CD8-positive, alpha-beta memory T cell (primary cell): ENCODE measurements at regions of chr19 and their contacts with region 1.

Region 1: DNA sequence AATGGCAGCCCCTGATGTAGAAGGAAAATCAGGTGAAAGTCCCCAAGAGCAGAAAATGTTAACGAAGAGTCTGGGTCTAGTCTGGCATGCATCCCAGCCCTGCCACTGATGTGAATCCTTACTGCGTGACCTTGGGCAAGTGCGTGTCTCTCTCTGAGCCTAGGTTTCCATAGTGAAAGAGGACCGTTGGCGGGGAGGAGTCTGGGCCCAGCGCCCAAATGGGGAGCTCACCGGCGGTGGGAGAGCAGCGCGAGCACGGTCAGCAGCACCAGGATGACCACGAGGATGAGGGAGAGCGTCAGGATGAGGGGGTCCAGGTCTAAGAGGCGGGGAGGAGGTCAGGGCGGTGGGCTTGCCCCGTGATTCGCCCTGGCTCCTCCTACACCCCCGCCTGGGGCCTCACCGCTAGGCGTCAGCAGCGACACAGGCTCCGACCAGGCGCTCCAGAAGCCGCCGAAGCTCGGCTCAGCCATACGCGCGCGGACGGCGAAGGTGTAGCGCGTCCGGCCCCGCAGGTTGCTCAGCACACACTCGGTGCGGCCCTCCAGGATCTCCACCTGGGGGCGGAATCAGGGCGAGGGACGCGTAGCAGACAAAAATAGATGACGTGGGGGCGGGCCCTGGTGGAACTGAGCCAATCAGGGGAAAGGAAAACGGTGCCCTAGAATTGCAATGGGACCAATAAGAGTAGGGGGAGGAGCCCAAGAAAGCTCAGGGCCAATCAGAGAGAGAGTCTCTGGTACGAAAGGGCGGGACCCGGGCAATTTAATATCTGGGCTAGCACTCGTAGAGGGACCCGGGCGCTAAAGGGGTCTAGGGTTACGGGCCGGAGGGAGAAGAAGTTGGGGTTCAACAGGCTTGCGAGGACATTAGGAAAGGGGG is 3.2 kb downstream of the EPOR start:
- DNase-seq: peak; percentile 93 to 99 (median 98)
- H3K4me3 ChIP-seq: peak overlapping the region; percentile 67
- H3K4me3 Mint-ChIP-seq: peak overlapping the region; percentile 84 to 98 (median 92)
- H3K27ac ChIP-seq: peak overlapping the region; percentile 89
- H3K27ac Mint-ChIP-seq: peak overlapping the region; percentile 95 to 100 (median 98)
- H3K4me1 ChIP-seq: peaks cover 52% of the 10 kb centered on the region
- H3K4me1 Mint-ChIP-seq: peaks cover 34 to 53% (median 46%) of the 10 kb centered on the region in 3 donors
- H3K27me3 ChIP-seq: peaks cover 5% of the 10 kb centered on the region
- H3K27me3 Mint-ChIP-seq: peaks cover 13 to 15% of the 10 kb centered on the region in 2 donors

Region 2: DNA sequence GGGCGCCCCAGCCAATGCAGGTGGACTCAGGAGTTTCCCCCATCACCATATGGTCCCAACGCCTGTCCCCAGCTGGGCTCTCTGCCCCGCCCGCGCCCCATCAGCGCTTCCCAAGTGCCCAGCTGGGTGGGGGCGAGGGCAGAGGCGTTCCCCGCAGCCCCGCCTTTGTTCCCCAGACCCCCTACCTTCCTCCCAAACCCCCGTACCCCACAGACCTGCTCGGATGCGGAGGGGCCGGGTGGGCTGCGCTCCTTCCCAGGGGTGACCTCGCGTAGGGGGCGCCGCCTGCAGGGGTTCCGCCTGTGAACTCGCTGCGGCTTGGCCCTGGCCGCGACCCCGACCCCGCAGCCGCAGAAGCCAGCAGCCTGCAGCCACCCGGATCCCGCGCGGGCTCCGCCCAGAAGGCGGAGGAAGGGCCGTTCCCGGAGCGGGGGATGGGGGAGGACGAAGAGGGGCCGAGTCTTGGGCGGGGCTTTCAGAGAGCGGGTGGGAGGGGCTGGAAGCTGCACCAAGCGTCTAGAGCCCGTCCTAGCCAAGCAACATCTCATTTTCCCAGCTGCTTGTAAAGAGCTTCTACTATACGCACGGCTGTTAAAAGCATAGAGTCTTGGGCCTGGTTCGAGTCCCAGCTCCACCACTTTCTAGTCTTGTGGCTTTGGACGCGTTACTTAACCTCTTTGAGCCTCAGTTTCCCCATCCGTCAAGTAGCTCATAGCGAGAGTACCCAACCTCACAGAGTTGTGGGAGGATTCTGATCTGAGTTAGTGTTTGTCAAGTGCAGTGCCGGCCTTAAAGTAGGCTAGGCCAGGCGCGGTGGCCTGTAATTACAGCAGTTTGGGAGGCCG is 41.4 kb before region 1 on chr19 and contains the start of gene RAB3D:
- CTCF ChIA-PET with region 1: interaction called, 13 read pairs
- POLR2A ChIA-PET with region 1: interaction called, 6 read pairs
- DNase-seq: peak; percentile 48 to 79 (median 62)
- H3K4me3 ChIP-seq: peak within 1 kb of the TSS; percentile 51
- H3K4me3 Mint-ChIP-seq: peak within 1 kb of the TSS; percentile 73 to 90 (median 80)
- H3K27ac ChIP-seq: peak within 1 kb of the TSS; percentile 31
- H3K27ac Mint-ChIP-seq: peak within 1 kb of the TSS; percentile 46 to 87 (median 76)
- H3K4me1 ChIP-seq: peaks cover 26% of the 10 kb centered on the region
- H3K4me1 Mint-ChIP-seq: peaks cover 20 to 33% (median 27%) of the 10 kb centered on the region in 3 donors
- H3K27me3 ChIP-seq: no peaks in the 10 kb centered on the region
- H3K27me3 Mint-ChIP-seq: peaks cover 0 to 2% of the 10 kb centered on the region in 2 donors
- total RNA-seq, gene RAB3D: 3.2 to 4.5 TPM

Region 3: DNA sequence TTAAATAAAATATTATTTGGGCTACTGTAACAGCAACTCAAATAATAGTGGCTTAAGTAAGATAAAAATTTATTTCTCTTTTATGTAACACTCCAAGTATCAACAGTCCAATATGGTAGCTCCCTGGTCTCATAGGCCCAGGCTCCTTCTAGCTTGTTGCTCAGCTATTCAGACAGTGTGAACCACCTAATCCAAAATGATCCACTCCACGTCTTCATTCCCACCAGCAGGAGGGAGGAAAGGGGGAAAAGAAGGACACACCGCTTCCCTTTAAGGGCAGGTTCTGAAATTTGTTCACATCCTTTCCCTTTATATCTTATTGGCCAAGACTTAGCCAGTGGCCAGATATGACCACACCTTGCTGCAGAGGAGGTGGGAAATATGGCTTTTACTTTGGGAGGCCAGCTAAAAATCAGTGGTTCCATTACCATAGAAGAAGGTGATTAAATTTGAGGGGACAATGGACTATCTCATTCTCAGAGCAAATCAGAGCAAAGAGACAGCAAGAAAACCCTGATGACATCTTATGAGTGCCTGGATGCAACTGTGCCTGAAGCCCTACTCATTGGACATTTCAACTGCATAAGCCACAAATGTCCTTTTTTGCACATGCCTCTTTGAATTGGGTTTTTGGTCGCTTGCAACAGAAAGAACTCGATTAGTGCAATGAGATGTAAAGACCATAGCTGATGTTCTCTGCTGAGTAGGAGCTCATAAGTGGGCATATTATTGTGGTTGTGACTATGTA is 10.2 kb after region 1 on chr19:
- CTCF ChIA-PET with region 1: interaction called, 10 read pairs
- POLR2A ChIA-PET with region 1: no interaction called
- DNase-seq: no peak
- H3K4me3 ChIP-seq: no peak overlapping the region
- H3K4me3 Mint-ChIP-seq: no peak overlapping the region
- H3K27ac ChIP-seq: no peak overlapping the region
- H3K27ac Mint-ChIP-seq: no peak overlapping the region
- H3K4me1 ChIP-seq: peaks cover 5% of the 10 kb centered on the region
- H3K4me1 Mint-ChIP-seq: peaks cover 3 to 7% (median 5%) of the 10 kb centered on the region in 3 donors
- H3K27me3 ChIP-seq: no peaks in the 10 kb centered on the region
- H3K27me3 Mint-ChIP-seq: peaks cover 6 to 8% of the 10 kb centered on the region in 2 donors

Region 4: DNA sequence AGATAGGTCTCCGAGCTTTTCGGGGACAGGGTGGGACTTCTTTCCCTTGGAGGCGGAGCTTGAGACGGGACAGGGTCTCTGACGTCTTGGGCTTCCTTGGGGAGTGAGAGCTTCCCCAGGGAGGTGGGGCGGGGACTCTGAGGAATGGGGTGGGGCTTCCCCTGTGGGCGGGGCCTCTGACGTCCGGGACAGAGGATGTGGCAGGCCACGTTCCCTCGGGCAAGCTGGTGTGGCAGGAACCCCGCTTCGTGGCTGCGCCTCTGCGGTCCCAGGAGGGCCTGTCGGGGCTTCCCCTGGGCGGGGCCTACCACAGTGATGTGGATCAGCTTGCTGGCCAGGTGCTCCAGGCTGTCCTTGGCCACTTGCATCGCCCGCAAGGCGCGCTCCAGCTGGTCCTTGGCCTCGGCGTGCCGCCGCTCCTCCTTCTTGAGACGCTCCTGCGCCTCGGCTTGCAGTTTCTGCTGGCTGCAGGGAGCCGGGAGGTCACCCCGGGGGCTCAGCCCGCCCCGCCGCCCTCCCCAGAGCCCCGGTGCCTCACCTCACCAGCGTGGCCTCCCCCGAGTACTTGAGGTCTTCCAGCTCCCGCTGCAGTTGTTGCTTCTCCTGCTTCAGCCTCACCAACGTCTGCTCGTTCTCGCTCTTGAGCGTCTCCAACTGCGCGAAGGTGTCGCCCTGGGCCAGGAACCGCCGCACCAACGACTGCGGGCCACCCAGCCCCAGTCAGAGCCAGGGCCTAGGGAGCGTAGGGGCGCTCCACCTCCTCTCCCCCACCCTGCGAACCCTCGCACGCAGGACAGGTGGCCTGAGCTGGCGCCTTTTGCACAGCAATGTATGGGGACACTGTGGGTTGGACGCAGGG is 41.5 kb after region 1 on chr19:
- CTCF ChIA-PET with region 1: interaction called, 10 read pairs
- POLR2A ChIA-PET with region 1: interaction called, 4 read pairs
- DNase-seq: peak; percentile 52 to 77 (median 69)
- H3K4me3 ChIP-seq: peak overlapping the region; percentile 43
- H3K4me3 Mint-ChIP-seq: peak overlapping the region; percentile 70 to 86 (median 80)
- H3K27ac ChIP-seq: no peak overlapping the region
- H3K27ac Mint-ChIP-seq: peak overlapping the region in 5 of 8 donors; percentile 43 to 78 (median 50)
- H3K4me1 ChIP-seq: peaks cover 37% of the 10 kb centered on the region
- H3K4me1 Mint-ChIP-seq: peaks cover 32 to 51% (median 37%) of the 10 kb centered on the region in 3 donors
- H3K27me3 ChIP-seq: peaks cover 36% of the 10 kb centered on the region
- H3K27me3 Mint-ChIP-seq: peaks cover 43 to 58% of the 10 kb centered on the region in 2 donors

Region 5: GRCh38 chr19:11482384-11483050 is 101.6 kb after region 1 on chr19:
- CTCF ChIA-PET with region 1: interaction called, 35 read pairs
- POLR2A ChIA-PET with region 1: interaction called, 9 read pairs
- DNase-seq: peak; percentile 80 to 89 (median 85)
- H3K4me3 ChIP-seq: peak overlapping the region; percentile 39
- H3K4me3 Mint-ChIP-seq: peak overlapping the region; percentile 38 to 79 (median 61)
- H3K27ac ChIP-seq: no peak overlapping the region
- H3K27ac Mint-ChIP-seq: peak overlapping the region in 4 of 8 donors; percentile 34 to 52 (median 48)
- H3K4me1 ChIP-seq: peaks cover 23% of the 10 kb centered on the region
- H3K4me1 Mint-ChIP-seq: peaks cover 19 to 26% (median 25%) of the 10 kb centered on the region in 3 donors
- H3K27me3 ChIP-seq: peaks cover 15% of the 10 kb centered on the region
- H3K27me3 Mint-ChIP-seq: peaks cover 26 to 28% of the 10 kb centered on the region in 2 donors